ENCODE measurements at regions of chr11 and their contacts with region 1.

Region 1: DNA sequence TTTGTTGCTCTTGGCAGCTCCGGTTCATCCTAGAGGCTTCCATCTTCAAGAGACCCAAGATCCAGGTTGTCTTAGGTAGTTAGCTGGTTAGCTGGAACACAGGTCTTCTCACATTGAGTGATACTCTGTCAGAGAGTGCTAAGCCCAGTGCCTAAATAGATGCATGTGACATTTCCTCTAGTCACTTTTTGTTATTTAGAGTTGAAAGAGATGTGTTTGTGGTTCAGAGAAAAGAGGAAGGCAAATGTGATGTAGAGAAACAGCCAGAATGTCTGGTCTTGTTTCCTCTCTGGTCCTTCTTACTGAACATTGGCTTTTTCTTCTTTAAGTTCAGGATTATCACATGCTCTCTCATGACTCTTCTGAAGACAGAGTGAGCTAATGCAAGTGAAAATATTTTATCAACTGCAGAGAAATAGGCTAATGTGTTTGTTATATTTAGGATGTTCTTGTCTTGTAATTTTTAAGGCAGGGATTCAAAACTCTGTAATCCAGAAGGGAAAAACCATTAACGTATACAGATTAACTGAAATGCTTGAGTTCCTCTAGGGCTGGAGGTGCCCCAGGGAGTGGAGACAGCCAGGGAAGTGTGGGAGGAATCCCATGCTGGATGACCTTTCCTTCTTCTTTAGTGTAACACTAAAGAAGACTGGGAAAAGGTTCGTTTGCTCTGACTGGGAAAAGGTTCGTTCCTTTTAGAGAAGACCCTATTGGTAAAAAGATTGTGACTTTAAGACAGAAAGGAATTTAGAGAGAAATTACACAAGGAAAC is 75.4 kb downstream of the SWAP70 start:
- DNase-seq: peak; percentile 77
- ATAC-seq: peak; percentile 85
- H3K4me3 ChIP-seq: no peak overlapping the region
- H3K4me3 Mint-ChIP-seq: peak overlapping the region; percentile 84
- H3K27ac ChIP-seq: peak overlapping the region; percentile 70 to 94
- H3K27ac Mint-ChIP-seq: peak overlapping the region; percentile 98
- H3K4me1 ChIP-seq: peaks cover 53 to 57% of the 10 kb centered on the region in 2 donors
- H3K4me1 Mint-ChIP-seq: peaks cover 67% of the 10 kb centered on the region
- H3K27me3 ChIP-seq: no peaks in the 10 kb centered on the region
- H3K27me3 Mint-ChIP-seq: no peaks in the 10 kb centered on the region
- CTCF ChIP-seq: no peak

Region 2: GRCh38 chr11:9573052-9573774 is 166.1 kb before region 1 on chr11 and contains the start of gene WEE1:
- CTCF ChIA-PET with region 1: no interaction called
- POLR2A ChIA-PET with region 1: no interaction called
- intact Hi-C with region 1: loop called (anchors 5 kb)
- DNase-seq: peak; percentile 97
- ATAC-seq: peak; percentile 87
- H3K4me3 ChIP-seq: peak within 1 kb of the TSS; percentile 52 to 96 (median 90)
- H3K4me3 Mint-ChIP-seq: peak within 1 kb of the TSS; percentile 97
- H3K27ac ChIP-seq: peak within 1 kb of the TSS; percentile 83 to 89
- H3K27ac Mint-ChIP-seq: peak within 1 kb of the TSS; percentile 94
- H3K4me1 ChIP-seq: peaks cover 51 to 55% of the 10 kb centered on the region in 2 donors
- H3K4me1 Mint-ChIP-seq: peaks cover 64% of the 10 kb centered on the region
- H3K27me3 ChIP-seq: no peaks in the 10 kb centered on the region
- H3K27me3 Mint-ChIP-seq: no peaks in the 10 kb centered on the region
- CTCF ChIP-seq: no peak
- total RNA-seq, gene WEE1: 31.2 and 31.3 TPM in 2 replicates

Region 3: DNA sequence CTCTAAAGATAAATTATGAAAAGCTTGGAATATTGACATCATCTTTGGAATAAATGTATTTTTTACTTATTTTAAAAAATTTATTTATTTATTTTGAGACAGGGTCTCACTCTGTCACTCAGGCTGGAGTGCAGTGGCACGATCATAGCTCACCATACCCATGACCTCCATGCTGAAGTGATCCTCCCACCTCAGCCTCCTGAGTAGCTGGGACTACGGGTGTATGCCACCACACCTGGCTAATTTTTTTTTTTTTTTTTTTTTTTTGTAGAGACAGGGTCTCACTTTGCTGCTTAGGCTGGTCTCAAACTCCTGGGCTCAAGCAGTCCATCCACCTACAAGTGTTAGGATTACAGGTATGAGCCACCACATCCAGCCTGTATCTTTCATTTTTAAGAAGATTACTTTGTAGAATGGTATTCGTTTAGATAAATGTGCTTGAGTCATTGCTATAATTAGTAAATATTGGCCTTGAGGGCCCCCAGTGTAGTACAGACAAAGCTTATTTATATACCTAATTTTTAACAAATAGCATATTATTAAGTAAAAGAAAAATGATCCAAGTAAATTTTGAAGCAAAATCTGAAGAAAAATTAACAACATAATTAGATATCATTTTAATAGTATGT is 66.9 kb before region 1 on chr11:
- CTCF ChIA-PET with region 1: no interaction called
- POLR2A ChIA-PET with region 1: interaction called, 18 read pairs
- intact Hi-C with region 1: no loop called
- DNase-seq: no peak
- ATAC-seq: no peak
- H3K4me3 ChIP-seq: peak overlapping the region in 1 of 5 experiments; percentile 33
- H3K4me3 Mint-ChIP-seq: peak overlapping the region; percentile 81
- H3K27ac ChIP-seq: peak overlapping the region; percentile 44 to 68
- H3K27ac Mint-ChIP-seq: no peak overlapping the region
- H3K4me1 ChIP-seq: peaks cover 72 to 80% of the 10 kb centered on the region in 2 donors
- H3K4me1 Mint-ChIP-seq: peaks cover 61% of the 10 kb centered on the region
- H3K27me3 ChIP-seq: no peaks in the 10 kb centered on the region
- H3K27me3 Mint-ChIP-seq: no peaks in the 10 kb centered on the region
- CTCF ChIP-seq: no peak

Region 4: DNA sequence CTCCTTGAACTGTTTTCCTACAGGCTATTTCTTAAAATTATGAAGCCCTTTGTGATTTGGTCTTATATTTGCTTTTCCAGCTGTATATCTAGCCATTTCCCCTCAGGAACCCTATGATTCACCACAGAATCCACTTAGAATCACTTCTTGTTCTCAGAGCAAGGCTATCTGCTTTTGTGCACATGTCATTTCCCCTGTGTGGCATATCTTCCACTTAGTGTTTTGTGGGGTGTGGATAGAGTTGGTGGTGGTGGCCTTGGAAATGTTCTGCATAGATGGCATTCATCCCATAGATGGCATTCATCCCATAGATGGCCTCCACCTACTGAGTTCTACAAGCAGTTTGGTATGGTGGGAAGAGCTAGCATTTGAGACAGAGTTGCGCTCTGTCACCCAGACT is 30.8 kb before region 1 on chr11:
- CTCF ChIA-PET with region 1: interaction called, 4 read pairs
- POLR2A ChIA-PET with region 1: no interaction called
- intact Hi-C with region 1: loop called (anchors 1 kb)
- DNase-seq: no peak
- ATAC-seq: no peak
- H3K4me3 ChIP-seq: no peak overlapping the region
- H3K4me3 Mint-ChIP-seq: peak overlapping the region; percentile 20
- H3K27ac ChIP-seq: peak overlapping the region; percentile 25 to 66
- H3K27ac Mint-ChIP-seq: peak overlapping the region; percentile 84
- H3K4me1 ChIP-seq: peaks cover 69 to 75% of the 10 kb centered on the region in 2 donors
- H3K4me1 Mint-ChIP-seq: peaks cover 65% of the 10 kb centered on the region
- H3K27me3 ChIP-seq: no peaks in the 10 kb centered on the region
- H3K27me3 Mint-ChIP-seq: no peaks in the 10 kb centered on the region
- CTCF ChIP-seq: no peak

Region 5: DNA sequence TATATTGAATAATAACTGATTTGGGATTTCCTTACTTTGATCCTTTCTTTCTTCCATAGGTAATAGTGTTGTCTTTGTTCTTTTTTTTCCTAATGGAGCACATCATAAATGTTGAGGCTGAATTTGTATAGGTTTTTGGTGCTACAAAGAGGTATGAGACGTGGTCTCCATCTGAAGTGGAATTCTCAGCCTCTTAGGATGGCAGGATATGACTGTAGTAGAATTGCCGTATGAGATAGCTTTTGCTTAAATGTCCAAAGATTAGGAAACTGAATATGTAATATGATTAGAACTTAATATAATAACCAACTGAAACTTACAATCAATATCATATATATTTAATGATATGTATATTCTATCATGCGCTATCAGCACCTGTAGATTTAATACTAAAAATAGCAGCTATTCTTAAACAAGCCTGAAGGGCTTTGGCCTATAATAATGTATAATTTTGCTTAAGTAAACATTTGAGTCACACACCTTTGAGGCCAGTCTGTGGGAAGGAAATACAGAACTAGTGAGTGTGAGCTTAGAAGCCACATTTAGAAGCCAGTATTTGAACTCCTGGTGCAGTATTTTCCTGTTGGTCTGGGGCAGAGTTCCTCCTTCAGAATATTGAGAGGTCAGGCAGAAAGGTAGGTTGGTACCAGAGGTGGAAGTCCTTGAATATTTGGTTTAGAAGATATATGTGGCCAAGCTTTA is 12.8 kb before region 1 on chr11:
- CTCF ChIA-PET with region 1: interaction called, 14 read pairs
- POLR2A ChIA-PET with region 1: no interaction called
- intact Hi-C with region 1: loop called (anchors 1 kb)
- DNase-seq: no peak
- ATAC-seq: peak; percentile 34
- H3K4me3 ChIP-seq: no peak overlapping the region
- H3K4me3 Mint-ChIP-seq: peak overlapping the region; percentile 65
- H3K27ac ChIP-seq: peak overlapping the region; percentile 14 to 86
- H3K27ac Mint-ChIP-seq: peak overlapping the region; percentile 87
- H3K4me1 ChIP-seq: peaks cover 68 to 76% of the 10 kb centered on the region in 2 donors
- H3K4me1 Mint-ChIP-seq: peaks cover 74% of the 10 kb centered on the region
- H3K27me3 ChIP-seq: no peaks in the 10 kb centered on the region
- H3K27me3 Mint-ChIP-seq: no peaks in the 10 kb centered on the region
- CTCF ChIP-seq: no peak